AG04449 (cell line): ENCODE measurements at regions of chr17 and their contacts with region 1.

Region 1: DNA sequence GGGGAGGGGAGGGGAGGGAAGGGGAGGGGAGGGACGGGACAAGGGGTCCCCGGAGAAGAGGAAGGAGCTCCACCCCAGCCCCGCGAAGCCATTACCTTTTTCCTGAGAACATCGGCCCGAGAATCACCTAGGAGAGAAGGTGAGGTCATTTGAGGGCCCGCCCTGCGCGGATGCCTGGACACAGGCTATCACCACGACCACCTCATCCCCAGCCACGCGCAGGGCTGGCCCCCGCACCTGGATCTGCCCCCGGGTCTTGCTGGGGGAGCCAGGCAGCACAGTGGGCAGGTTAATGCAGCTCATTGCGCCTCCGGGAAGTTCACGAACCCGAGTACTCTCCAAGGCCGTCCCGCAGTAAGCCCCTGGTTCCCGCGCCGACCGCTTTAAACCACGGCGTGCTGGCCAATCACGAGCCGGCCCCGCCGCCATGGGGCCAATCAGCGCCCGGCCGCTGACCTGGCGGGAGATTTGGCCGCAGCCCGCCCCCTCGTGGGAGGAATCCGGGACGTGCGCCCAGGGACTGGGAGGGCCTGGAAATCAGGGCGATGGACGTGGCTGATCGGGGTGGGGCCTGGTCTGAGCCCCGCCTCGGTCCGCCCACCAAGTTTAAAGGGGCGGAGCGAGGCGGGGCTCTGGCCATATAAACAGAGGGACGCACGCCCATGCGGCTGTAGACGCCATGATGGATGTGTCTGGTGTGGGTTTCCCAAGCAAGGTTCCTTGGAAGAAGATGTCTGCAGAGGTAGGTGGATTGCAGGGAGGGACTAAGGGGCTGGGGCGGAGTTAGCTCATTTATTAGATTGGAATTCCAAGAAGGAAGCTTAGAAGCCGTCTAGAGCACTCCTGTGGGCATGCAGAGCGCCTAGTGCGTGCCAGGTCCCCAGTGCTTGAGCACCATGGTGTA is at the starts of genes AFMID and TK1:
- DNase-seq: peak; percentile 52
- H3K4me3 ChIP-seq: peak within 1 kb of the TSS; percentile 87
- CTCF ChIP-seq: peak; percentile 95

Region 2: GRCh38 chr17:78120971-78121800 is 65.8 kb before region 1 on chr17:
- CTCF ChIA-PET with region 1: no interaction called
- POLR2A ChIA-PET with region 1: no interaction called
- DNase-seq: no peak
- H3K4me3 ChIP-seq: no peak overlapping the region
- CTCF ChIP-seq: no peak

Region 3: GRCh38 chr17:78168242-78168902 is 18.6 kb before region 1 on chr17 and contains the start of gene SYNGR2:
- CTCF ChIA-PET with region 1: interaction called, 119 read pairs
- POLR2A ChIA-PET with region 1: interaction called, 3 read pairs
- DNase-seq: no peak
- H3K4me3 ChIP-seq: peak within 1 kb of the TSS; percentile 55
- CTCF ChIP-seq: no peak

Region 4: DNA sequence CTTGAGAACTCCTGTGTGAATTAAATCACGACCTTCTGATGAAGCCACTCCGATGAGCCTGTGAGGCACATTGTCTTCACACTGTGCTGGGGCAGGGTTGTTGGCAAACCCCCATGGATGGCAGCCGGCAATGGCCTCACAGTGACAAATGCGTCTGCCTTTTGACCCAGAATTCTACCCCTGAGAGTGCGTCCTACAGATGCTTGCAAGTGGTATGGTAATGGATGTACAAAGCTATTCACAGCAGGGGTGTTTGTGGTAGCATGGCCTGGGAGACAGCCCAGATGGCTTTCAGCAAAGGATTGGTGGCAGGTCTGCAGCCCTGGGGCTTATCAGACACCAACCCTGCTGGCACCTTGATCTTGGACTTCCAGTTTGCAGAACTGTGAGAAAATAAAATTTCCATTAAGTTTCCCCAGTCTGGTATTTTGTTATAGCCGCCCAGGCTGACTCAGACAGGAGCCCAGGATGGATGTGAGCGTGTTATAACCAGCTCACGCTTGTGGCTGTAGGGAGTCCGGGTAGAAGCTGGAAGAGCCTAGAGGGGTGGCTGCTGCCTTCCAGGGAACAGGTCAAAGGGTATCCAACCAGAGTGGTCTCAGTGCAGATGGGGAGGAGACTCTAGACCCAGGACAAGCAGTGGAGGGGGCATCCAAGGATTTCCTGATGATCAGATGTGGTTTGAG is 10.3 kb after region 1 on chr17:
- CTCF ChIA-PET with region 1: interaction called, 36 read pairs
- POLR2A ChIA-PET with region 1: no interaction called
- DNase-seq: no peak
- H3K4me3 ChIP-seq: no peak overlapping the region
- CTCF ChIP-seq: no peak

Region 5: GRCh38 chr17:78263063-78263743 is 76.3 kb after region 1 on chr17:
- CTCF ChIA-PET with region 1: no interaction called
- POLR2A ChIA-PET with region 1: no interaction called
- DNase-seq: no peak
- H3K4me3 ChIP-seq: no peak overlapping the region
- CTCF ChIP-seq: no peak